ENCODE measurements at regions of chr1 and their contacts with region 1.

Region 1: GRCh38 chr1:234065794-234066447 is 161.4 kb downstream of the SLC35F3 start:
- DNase-seq: peak; percentile 88
- H3K4me3 Mint-ChIP-seq: no peak overlapping the region
- H3K27ac Mint-ChIP-seq: no peak overlapping the region
- H3K4me1 Mint-ChIP-seq: no peaks in the 10 kb centered on the region
- H3K27me3 Mint-ChIP-seq: peaks cover 2% of the 10 kb centered on the region

Region 2: GRCh38 chr1:233304489-233305102 is 761.3 kb before region 1 on chr1:
- intact Hi-C with region 1: loop called (anchors 2 kb)
- DNase-seq: no peak
- H3K4me3 Mint-ChIP-seq: no peak overlapping the region
- H3K27ac Mint-ChIP-seq: no peak overlapping the region
- H3K4me1 Mint-ChIP-seq: no peaks in the 10 kb centered on the region
- H3K27me3 Mint-ChIP-seq: peaks cover 41% of the 10 kb centered on the region

Region 3: GRCh38 chr1:233364695-233365539 is 701.0 kb before region 1 on chr1:
- intact Hi-C with region 1: loop called (anchors 10 kb)
- DNase-seq: no peak
- H3K4me3 Mint-ChIP-seq: no peak overlapping the region
- H3K27ac Mint-ChIP-seq: no peak overlapping the region
- H3K4me1 Mint-ChIP-seq: no peaks in the 10 kb centered on the region
- H3K27me3 Mint-ChIP-seq: peaks cover 9% of the 10 kb centered on the region

Region 4: DNA sequence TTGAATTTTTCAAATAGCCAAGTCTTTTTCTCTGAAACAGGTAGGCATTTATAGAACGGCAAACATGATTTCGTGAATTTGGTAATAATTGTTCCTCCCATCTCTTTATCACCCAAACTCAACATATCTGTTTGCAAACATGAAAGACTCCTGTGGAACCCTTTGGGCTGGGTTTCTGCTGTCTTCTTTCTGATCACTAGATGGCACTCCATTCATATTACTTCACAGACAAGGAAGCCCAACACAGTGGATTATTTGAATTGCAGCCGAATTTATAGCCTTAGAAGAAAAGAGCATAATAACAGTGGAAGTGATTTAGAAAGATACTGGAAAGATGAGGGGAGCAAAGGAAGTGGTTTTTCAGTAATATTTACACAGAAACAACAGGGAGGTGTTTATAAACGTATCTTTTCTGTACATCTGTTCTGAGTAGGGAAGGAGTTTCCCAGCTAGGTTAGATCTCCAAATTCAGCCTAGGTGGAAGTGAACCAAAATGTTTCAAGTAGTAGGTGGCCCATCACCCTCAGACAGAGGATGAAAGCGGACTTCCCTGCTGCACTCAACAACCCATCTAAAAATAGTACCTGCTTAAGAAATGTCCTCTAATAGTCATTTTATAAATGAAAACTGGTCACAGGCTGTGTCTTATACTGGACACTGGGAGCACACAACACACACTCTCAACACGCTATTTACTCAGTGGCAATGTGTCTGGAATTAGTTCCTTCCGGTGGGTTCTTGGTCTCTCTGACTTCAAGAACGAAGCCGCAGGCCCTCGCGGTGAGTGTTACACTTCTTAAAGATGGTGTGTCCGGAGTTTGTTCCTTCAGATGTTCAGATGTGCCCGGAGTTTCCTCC is 670.8 kb before region 1 on chr1:
- intact Hi-C with region 1: loop called (anchors 1 kb)
- DNase-seq: peak; percentile 82
- H3K4me3 Mint-ChIP-seq: no peak overlapping the region
- H3K27ac Mint-ChIP-seq: no peak overlapping the region
- H3K4me1 Mint-ChIP-seq: no peaks in the 10 kb centered on the region
- H3K27me3 Mint-ChIP-seq: peaks cover 37% of the 10 kb centered on the region

Region 5: DNA sequence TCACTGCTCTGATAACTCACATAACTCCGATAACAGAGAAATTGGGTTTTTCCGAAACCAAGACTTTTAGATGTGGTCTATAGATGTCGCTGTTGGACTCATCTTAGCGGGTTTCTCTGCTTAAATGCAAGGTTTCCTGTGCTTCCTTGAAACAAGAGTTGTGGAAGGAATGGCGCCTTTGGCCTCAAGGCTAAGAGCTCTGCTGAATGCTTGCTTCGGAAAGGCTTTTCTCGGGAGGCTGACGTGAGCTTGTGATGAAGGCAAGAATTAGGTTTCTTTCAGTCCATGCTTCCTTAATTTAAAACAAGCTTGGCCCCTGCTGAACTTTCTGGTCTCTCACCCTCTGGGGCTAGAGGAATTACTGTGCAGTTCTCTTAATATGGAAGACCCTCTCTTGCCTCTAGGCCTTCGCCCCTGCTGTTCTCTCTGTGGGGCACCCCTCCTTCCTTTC is 624.9 kb before region 1 on chr1:
- intact Hi-C with region 1: loop called (anchors 5 kb)
- DNase-seq: peak; percentile 69
- H3K4me3 Mint-ChIP-seq: no peak overlapping the region
- H3K27ac Mint-ChIP-seq: no peak overlapping the region
- H3K4me1 Mint-ChIP-seq: no peaks in the 10 kb centered on the region
- H3K27me3 Mint-ChIP-seq: peaks cover 18% of the 10 kb centered on the region

Measured in activated CD4-positive, alpha-beta T cell treated with anti-CD3 and anti-CD28 coated beads, Interleukin-2, amount 10 ng/mL, durations not matched to agents 24 days and 14 days (primary cell).